ENCODE measurements at regions of chr6 and their contacts with region 1.

Region 1: GRCh38 chr6:56699066-56699654 is 56.5 kb upstream of the DST start:
- DNase-seq: no peak
- H3K4me3 ChIP-seq: no peak overlapping the region
- H3K27ac ChIP-seq: no peak overlapping the region
- H3K4me1 ChIP-seq: peaks cover 0 to 64% (median 16%) of the 10 kb centered on the region in 4 donors
- H3K27me3 ChIP-seq: no peaks in the 10 kb centered on the region
- CTCF ChIP-seq: peak in 3 of 4 experiments; percentile 35 to 59 (median 46)
- EP300 ChIP-seq: no peak
- POLR2A ChIP-seq: no peak

Region 2: GRCh38 chr6:56364827-56365313 is 334.3 kb before region 1 on chr6:
- intact Hi-C with region 1: loop called (anchors 10 kb)
- DNase-seq: no peak
- H3K4me3 ChIP-seq: no peak overlapping the region
- H3K27ac ChIP-seq: peak overlapping the region in 2 of 4 donors; percentile 6 to 95
- H3K4me1 ChIP-seq: peaks cover 0 to 59% (median 46%) of the 10 kb centered on the region in 4 donors
- H3K27me3 ChIP-seq: no peaks in the 10 kb centered on the region
- CTCF ChIP-seq: no peak
- EP300 ChIP-seq: no peak
- POLR2A ChIP-seq: no peak

Region 3: DNA sequence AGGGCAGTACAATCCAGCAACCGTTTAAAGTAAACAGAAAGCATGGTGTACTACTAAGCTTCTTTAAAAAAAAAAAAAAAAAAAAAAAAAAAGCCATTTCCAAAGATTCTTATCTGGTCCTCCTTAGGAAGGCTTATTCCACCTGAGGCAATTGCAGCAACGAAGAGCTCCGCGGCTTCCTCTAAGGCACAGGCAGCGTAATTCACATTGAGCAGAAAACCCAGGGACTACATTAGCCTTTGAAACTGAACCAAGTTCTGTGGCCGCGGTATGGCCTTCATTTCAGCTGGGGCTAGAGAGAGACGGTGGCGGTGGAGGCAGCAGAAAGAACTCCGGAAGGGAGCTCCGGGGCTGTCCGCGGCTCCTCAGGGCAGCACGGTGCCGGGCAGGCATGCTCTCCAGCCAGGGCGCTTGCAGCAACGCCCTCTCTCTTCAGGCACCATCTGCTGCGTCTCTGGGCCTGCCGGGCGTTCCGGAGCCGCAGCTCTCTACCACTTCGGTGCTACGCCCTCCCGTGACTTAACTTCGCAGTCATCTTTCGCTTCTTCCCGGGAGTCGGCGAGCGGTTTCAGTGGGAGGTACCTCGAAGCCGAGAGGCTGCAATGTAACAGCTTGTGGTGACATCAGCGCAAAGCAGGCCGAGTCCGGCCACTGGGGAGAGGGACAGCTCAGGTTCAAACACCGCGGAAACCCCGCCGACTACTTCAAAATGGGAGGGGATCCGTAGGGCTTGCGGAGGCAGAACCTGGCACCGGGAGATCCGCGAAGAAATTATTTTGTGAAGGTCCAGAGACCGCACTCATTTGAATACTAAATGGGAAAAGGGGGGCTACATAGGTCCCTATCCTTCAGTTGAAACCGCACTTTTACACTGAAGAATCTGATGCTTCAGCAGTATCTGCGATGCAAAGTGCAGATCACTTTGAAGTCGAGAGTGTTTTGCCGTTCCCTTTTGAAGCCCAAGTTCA is 156.5 kb before region 1 on chr6:
- intact Hi-C with region 1: no loop called
- DNase-seq: peak; percentile 99
- H3K4me3 ChIP-seq: peak overlapping the region; percentile 56 to 71 (median 68)
- H3K27ac ChIP-seq: peak overlapping the region; percentile 92 to 96 (median 94)
- H3K4me1 ChIP-seq: peaks cover 0 to 50% (median 37%) of the 10 kb centered on the region in 4 donors
- H3K27me3 ChIP-seq: no peaks in the 10 kb centered on the region
- CTCF ChIP-seq: peak in 2 of 4 experiments; percentile 24 to 29
- EP300 ChIP-seq: peak in 1 of 4 donors; percentile 60
- POLR2A ChIP-seq: peak; percentile 84 to 91

Region 4: GRCh38 chr6:56637640-56638039 is 61.5 kb before region 1 on chr6:
- intact Hi-C with region 1: loop called (anchors 2 kb)
- DNase-seq: no peak
- H3K4me3 ChIP-seq: no peak overlapping the region
- H3K27ac ChIP-seq: peak overlapping the region in 3 of 4 donors; percentile 23 to 58 (median 34)
- H3K4me1 ChIP-seq: peaks cover 0 to 17% (median 1%) of the 10 kb centered on the region in 4 donors
- H3K27me3 ChIP-seq: no peaks in the 10 kb centered on the region
- CTCF ChIP-seq: peak; percentile 52 to 73 (median 60)
- EP300 ChIP-seq: no peak
- POLR2A ChIP-seq: no peak